PC-9 (cell line): ENCODE measurements at regions of chr1 and their contacts with region 1.

Region 1: DNA sequence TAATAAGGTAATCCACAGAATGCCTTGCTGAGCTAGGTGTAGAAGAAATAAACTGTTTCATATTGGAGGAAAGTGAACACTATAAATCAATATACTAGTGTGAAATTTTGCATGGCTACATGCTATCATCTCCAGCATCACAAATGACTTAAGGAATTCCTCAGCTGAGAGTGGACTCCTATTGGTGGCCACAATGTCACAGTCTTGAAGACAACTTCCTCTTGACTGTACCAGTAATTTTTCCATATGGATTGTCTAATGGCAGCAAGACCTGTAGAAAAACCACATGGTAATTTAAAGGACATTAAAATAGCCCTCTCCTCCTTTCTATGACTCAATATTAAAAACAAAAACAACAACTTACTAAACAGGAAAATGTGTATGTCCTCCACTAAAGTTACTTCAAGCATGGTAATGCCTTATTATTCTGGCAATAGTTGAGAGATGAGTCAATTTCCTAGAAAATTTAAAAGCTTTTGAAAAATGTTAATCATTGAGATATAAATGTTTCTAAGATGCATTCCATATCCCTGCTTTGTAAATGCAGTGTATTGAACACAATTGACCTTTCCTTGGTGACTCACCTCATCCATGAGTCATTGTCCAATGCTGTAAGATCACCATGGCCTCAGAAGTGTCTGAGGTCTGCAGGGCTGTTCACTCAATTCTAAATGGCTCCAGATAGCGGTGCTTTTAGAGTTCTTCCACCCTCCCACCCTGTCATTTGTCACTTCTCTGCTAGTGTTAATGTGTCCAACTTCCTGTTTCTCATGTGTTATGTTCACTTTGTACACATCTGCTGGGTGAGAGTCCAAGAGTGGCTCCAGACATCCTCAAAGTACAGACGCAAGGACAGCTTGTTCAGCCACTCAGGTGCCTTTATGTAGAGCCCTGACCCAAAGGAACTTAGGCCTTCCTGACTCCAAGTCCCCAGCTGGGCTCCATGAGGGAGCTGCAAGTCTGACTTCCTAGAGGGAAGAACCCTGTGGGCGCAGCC is 32.8 kb upstream of the DNASE2B start:
- DNase-seq: peak; percentile 58 to 99
- H3K4me3 ChIP-seq: no peak overlapping the region
- H3K27ac ChIP-seq: peak overlapping the region; percentile 59
- H3K4me1 ChIP-seq: peaks cover 36% of the 10 kb centered on the region
- H3K27me3 ChIP-seq: no peaks in the 10 kb centered on the region
- CTCF ChIP-seq: no peak

Region 2: GRCh38 chr1:84427520-84428188 is 62.1 kb after region 1 on chr1:
- CTCF ChIA-PET with region 1: no interaction called
- POLR2A ChIA-PET with region 1: no interaction called
- intact Hi-C with region 1: loop called (anchors 10 kb)
- DNase-seq: peak; percentile 36 to 90
- H3K4me3 ChIP-seq: no peak overlapping the region
- H3K27ac ChIP-seq: peak overlapping the region; percentile 24; the same call in 1 of the 2 replicates
- H3K4me1 ChIP-seq: peaks cover 31% of the 10 kb centered on the region
- H3K27me3 ChIP-seq: no peaks in the 10 kb centered on the region
- CTCF ChIP-seq: no peak